Heart left ventricle (tissue), 16 donors: ENCODE measurements at regions of chr4 and their contacts with region 1.

Region 1: GRCh38 chr4:120156120-120156718 is 89.6 kb upstream of the MAD2L1 start:
- DNase-seq: no peak
- ATAC-seq: no peak
- H3K4me3 ChIP-seq: no peak overlapping the region
- H3K27ac ChIP-seq: no peak overlapping the region
- H3K4me1 ChIP-seq: no peaks in the 10 kb centered on the region
- H3K27me3 ChIP-seq: no peaks in the 10 kb centered on the region
- CTCF ChIP-seq: peak; percentile 56 to 82 (median 67)
- POLR2A ChIP-seq: no peak

Region 2: GRCh38 chr4:118981839-118982381 is 1174.3 kb before region 1 on chr4:
- intact Hi-C with region 1: no loop called
- DNase-seq: peak in 4 of 5 donors; percentile 59 to 74 (median 67)
- ATAC-seq: peak; percentile 69 to 81 (median 77)
- H3K4me3 ChIP-seq: peak overlapping the region in 1 of 12 donors; percentile 6
- H3K27ac ChIP-seq: peak overlapping the region in 9 of 12 donors; percentile 18 to 87 (median 59)
- H3K4me1 ChIP-seq: peaks cover 3 to 86% (median 48%) of the 10 kb centered on the region in 12 donors
- H3K27me3 ChIP-seq: no peaks in the 10 kb centered on the region
- CTCF ChIP-seq: peak; percentile 58 to 83 (median 74)
- POLR2A ChIP-seq: no peak

Region 3: DNA sequence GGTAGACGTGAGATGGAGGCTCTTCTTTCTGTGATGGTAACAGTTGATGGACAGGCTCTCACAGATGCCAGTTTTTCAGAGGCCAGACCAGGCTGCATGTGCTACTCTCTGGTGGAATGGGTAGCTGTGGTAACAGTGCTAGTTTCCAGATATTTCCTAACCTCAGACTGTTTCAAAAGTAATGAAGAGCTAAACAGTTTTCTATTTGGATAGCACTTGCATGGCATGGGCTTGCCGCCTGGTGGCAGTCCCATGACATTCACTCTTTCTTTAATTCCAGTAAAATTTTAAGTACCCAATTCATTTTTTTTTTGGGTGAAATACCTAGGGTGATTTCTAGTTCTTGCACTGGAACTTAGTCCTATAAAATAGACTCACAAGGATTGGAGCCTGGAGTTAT is 130.6 kb after region 1 on chr4:
- intact Hi-C with region 1: no loop called
- DNase-seq: no peak
- ATAC-seq: no peak
- H3K4me3 ChIP-seq: no peak overlapping the region
- H3K27ac ChIP-seq: no peak overlapping the region
- H3K4me1 ChIP-seq: no peaks in the 10 kb centered on the region
- H3K27me3 ChIP-seq: no peaks in the 10 kb centered on the region
- CTCF ChIP-seq: no peak
- POLR2A ChIP-seq: no peak

Region 4: GRCh38 chr4:120940547-120940946 is 784.3 kb after region 1 on chr4:
- intact Hi-C with region 1: loop called in 1 of 10 experiments (anchors 5 kb)
- DNase-seq: no peak
- ATAC-seq: peak in 2 of 4 donors; percentile 41 to 57
- H3K4me3 ChIP-seq: no peak overlapping the region
- H3K27ac ChIP-seq: no peak overlapping the region
- H3K4me1 ChIP-seq: no peaks in the 10 kb centered on the region
- H3K27me3 ChIP-seq: no peaks in the 10 kb centered on the region
- CTCF ChIP-seq: peak in 9 of 12 donors; percentile 11 to 34 (median 20)
- POLR2A ChIP-seq: no peak

Region 5: DNA sequence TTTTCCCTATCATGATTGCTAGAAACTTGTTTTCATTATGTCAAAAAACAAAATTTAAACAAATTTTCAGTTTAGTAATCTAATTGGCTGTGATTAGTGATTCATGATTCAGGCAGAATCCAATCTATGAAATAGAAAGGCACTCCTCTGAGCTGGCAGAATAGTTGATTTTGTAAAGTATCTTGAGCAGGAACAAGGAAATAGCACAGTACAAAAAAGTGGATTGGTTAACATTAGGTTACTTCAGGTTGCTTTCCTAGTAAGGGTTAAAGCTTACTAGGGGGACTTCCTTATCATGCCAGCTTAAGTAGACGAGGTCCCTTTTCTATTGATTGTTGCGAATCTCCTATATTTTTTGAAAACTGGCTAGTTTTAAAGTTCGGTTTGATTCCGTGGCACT is 809.7 kb after region 1 on chr4:
- intact Hi-C with region 1: loop called in 1 of 10 experiments (anchors 10 kb)
- DNase-seq: no peak
- ATAC-seq: no peak
- H3K4me3 ChIP-seq: no peak overlapping the region
- H3K27ac ChIP-seq: no peak overlapping the region
- H3K4me1 ChIP-seq: no peaks in the 10 kb centered on the region
- H3K27me3 ChIP-seq: no peaks in the 10 kb centered on the region
- CTCF ChIP-seq: no peak
- POLR2A ChIP-seq: no peak

Region 6: DNA sequence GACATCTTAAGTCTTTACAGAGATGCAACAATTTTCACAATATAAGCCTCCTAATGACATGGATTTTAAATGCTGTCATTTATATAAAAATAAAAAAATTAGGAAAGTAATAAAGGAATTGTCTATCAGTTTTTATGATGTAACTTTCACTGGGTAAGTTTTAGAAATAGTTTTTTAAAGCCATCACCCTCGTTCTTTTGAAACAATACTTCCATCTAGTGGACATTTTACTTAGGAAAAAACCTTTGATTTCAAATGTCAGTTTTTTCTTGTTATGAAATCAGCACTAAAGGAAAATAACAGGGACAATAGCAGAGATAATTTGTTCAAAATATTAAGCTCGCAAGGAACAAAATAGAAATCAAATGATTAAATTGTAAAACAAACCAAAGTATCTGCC is 940.4 kb after region 1 on chr4:
- intact Hi-C with region 1: loop called (anchors 1 to 5 kb)
- DNase-seq: no peak
- ATAC-seq: no peak
- H3K4me3 ChIP-seq: no peak overlapping the region
- H3K27ac ChIP-seq: no peak overlapping the region
- H3K4me1 ChIP-seq: no peaks in the 10 kb centered on the region
- H3K27me3 ChIP-seq: no peaks in the 10 kb centered on the region
- CTCF ChIP-seq: peak; percentile 45 to 83 (median 67)
- POLR2A ChIP-seq: no peak

Region 7: GRCh38 chr4:121112530-121112929 is 956.3 kb after region 1 on chr4:
- intact Hi-C with region 1: loop called in 2 of 10 experiments (anchors 5 kb)
- DNase-seq: no peak
- ATAC-seq: no peak
- H3K4me3 ChIP-seq: no peak overlapping the region
- H3K27ac ChIP-seq: no peak overlapping the region
- H3K4me1 ChIP-seq: no peaks in the 10 kb centered on the region
- H3K27me3 ChIP-seq: peaks cover 0 to 4% (median 0%) of the 10 kb centered on the region in 9 donors
- CTCF ChIP-seq: peak; percentile 25 to 57 (median 44)
- POLR2A ChIP-seq: no peak

Region 8: GRCh38 chr4:121252224-121252806 is 1096.1 kb after region 1 on chr4:
- intact Hi-C with region 1: loop called in 6 of 10 experiments (anchors 2 to 10 kb)
- DNase-seq: peak in 4 of 5 donors; percentile 32 to 71 (median 44)
- ATAC-seq: peak in 3 of 4 donors; percentile 62 to 79 (median 78)
- H3K4me3 ChIP-seq: no peak overlapping the region
- H3K27ac ChIP-seq: no peak overlapping the region
- H3K4me1 ChIP-seq: peaks cover 0 to 15% (median 0%) of the 10 kb centered on the region in 12 donors
- H3K27me3 ChIP-seq: no peaks in the 10 kb centered on the region
- CTCF ChIP-seq: peak; percentile 63 to 85 (median 80)
- POLR2A ChIP-seq: no peak